AG04450 (cell line): ENCODE measurements at regions of chr3 and their contacts with region 1.

Region 1: GRCh38 chr3:69161587-69162307 is 39.4 kb upstream of the LMOD3 start:
- DNase-seq: peak; percentile 7
- H3K4me3 ChIP-seq: no peak overlapping the region
- H3K27ac ChIP-seq: no peak overlapping the region
- H3K27me3 ChIP-seq: peaks cover 11% of the 10 kb centered on the region
- CTCF ChIP-seq: peak; percentile 98

Region 2: GRCh38 chr3:69174871-69175737 is 13.4 kb after region 1 on chr3:
- CTCF ChIA-PET with region 1: interaction called, 65 read pairs
- POLR2A ChIA-PET with region 1: no interaction called
- DNase-seq: no peak
- H3K4me3 ChIP-seq: no peak overlapping the region
- H3K27ac ChIP-seq: no peak overlapping the region
- H3K27me3 ChIP-seq: no peaks in the 10 kb centered on the region
- CTCF ChIP-seq: no peak

Region 3: GRCh38 chr3:69410250-69410649 is 248.5 kb after region 1 on chr3:
- CTCF ChIA-PET with region 1: interaction called, 64 read pairs
- POLR2A ChIA-PET with region 1: no interaction called
- DNase-seq: no peak
- H3K4me3 ChIP-seq: no peak overlapping the region
- H3K27ac ChIP-seq: no peak overlapping the region
- H3K27me3 ChIP-seq: no peaks in the 10 kb centered on the region
- CTCF ChIP-seq: peak; percentile 89

Region 4: GRCh38 chr3:69439643-69440270 is 278.0 kb after region 1 on chr3:
- CTCF ChIA-PET with region 1: interaction called, 23 read pairs
- POLR2A ChIA-PET with region 1: no interaction called
- DNase-seq: no peak
- H3K4me3 ChIP-seq: no peak overlapping the region
- H3K27ac ChIP-seq: no peak overlapping the region
- H3K27me3 ChIP-seq: no peaks in the 10 kb centered on the region
- CTCF ChIP-seq: peak; percentile 75